Left cardiac atrium (tissue), 4 donors: ENCODE measurements at regions of chr18 and their contacts with region 1.

Region 1: DNA sequence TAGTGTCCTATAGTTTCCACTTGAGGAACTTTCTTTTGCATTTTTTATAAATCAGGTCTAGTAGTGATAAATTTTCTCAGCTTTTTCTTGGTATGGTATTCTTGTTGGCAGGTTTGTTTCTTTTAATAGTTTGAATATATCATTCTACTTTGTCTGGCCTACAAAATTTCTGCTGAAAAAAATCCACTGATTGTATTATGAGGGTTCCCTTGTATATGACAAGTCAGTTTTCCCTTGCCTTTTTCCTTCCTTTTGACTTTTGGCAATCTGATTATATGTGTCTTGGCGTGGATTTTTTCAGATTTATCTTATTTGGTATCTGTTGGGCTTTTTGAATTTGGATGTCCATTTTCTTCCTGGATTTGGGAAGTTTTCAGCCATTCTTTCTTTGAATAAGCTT is 41.9 kb downstream of the MOCOS start:
- DNase-seq: no peak
- ATAC-seq: no peak

Region 2: GRCh38 chr18:36499938-36500337 is 270.8 kb after region 1 on chr18:
- intact Hi-C with region 1: loop called in 1 of 2 experiments (anchors 10 kb)
- DNase-seq: no peak
- ATAC-seq: no peak